Right ventricle myocardium superior (tissue), 1 donor: ENCODE measurements at regions of chr12 and their contacts with region 1.

Region 1: DNA sequence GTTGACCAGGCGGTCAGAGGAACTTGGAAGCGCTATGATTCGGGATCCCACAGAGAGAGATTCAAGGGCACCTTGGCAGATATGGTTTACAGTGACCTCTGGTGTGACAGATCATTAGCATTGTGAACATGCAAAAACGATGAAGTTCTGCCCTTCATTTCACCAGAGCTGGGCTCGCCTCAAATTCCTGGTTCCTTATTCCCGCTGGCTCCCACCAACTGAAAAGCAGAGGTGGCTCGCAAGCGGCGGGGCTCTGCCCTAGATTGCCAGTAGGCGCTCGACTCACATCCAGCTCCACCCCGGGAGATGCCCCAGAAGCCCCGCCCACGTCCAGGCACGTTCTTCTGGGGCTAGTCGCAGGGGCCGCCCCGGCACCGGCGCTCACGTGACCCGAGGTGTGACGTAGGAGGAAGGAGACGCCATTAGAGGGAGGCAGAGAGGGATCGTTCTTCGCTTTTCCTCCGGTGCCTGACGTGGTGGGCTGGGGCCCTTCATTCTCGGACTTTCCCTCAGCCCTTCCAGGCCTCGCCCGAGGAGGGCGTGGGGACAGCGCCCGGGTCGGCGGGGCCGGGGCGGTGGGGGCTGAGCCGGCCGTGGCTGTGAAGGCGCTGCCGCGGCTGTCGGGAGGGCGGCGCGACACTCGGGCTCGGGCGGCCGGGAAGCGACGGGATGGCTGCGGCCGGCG is at the start of gene RAB21:
- DNase-seq: peak; percentile 98
- ATAC-seq: peak; percentile 97
- total RNA-seq, gene RAB21: 163 TPM

Region 2: GRCh38 chr12:71663561-71664294 is 90.9 kb before region 1 on chr12 and contains the start of gene ZFC3H1:
- intact Hi-C with region 1: loop called (anchors 10 kb)
- DNase-seq: peak; percentile 94
- ATAC-seq: peak; percentile 98
- total RNA-seq, gene ZFC3H1: 17.9 TPM

Region 3: GRCh38 chr12:71804505-71804904 is 49.9 kb after region 1 on chr12:
- intact Hi-C with region 1: no loop called
- DNase-seq: no peak
- ATAC-seq: no peak